Thyroid gland (tissue), 4 donors: ENCODE measurements at regions of chr13 and their contacts with region 1.

Region 1: DNA sequence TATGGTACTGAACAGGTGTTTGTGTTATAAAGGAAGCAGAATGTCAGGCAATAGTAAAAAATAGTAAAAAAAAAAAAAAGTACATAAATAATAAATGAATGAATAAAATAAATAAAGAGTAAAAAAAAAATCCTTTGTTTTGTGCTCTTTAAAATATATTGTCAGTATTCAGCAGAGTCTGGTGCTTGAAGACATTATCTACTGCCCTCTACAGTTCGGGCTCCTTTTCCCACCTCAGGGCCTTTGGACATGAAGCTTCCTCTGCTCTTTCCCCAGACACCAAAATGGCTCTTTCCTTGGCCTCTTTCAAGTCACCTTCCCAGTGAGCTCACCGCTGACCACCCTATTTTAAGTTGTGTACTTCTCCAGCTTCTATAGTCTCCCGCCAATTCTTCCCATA is 137.5 kb downstream of the TNFRSF19 start:
- DNase-seq: no peak
- H3K4me3 ChIP-seq: no peak overlapping the region
- H3K27ac ChIP-seq: no peak overlapping the region
- H3K4me1 ChIP-seq: no peaks in the 10 kb centered on the region
- H3K27me3 ChIP-seq: no peaks in the 10 kb centered on the region
- CTCF ChIP-seq: peak in 2 of 6 experiments; percentile 17 to 19
- POLR2A ChIP-seq: no peak

Region 2: GRCh38 chr13:23466144-23467002 is 241.3 kb before region 1 on chr13:
- intact Hi-C with region 1: loop called (anchors 5 kb)
- DNase-seq: peak; percentile 68 to 74
- H3K4me3 ChIP-seq: peak overlapping the region in 2 of 3 donors; percentile 31 to 38
- H3K27ac ChIP-seq: peak overlapping the region in 2 of 3 donors; percentile 43 to 69
- H3K4me1 ChIP-seq: peaks cover 0 to 5% of the 10 kb centered on the region in 2 donors
- H3K27me3 ChIP-seq: no peaks in the 10 kb centered on the region
- CTCF ChIP-seq: peak in 4 of 6 experiments; percentile 56 to 64 (median 58)
- POLR2A ChIP-seq: no peak